ENCODE measurements at regions of chr1 and their contacts with region 1.

Region 1: DNA sequence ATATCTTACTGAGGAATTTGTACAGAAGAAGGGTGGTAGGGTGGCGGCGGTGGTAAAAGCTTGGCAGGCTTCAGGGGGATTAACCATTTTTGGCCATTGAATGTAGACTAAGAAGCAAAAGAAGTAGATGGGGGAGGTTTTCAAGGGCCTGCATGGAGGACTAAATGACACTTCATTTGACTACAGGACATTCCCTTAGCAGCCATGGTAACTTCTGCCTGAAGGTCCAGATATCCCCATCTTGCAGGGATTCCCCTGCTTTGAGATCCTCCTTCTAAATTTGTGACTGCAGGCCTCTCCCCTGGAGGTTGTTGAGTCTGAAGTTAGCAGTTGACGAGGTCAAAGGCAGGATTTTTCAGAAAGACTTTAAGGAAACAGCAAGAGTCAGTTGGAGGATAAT is 4.8 kb downstream of the VASH2 start:
- DNase-seq: no peak
- H3K4me3 Mint-ChIP-seq: no peak overlapping the region
- H3K27ac Mint-ChIP-seq: no peak overlapping the region
- H3K4me1 Mint-ChIP-seq: peaks cover 8% of the 10 kb centered on the region
- H3K27me3 Mint-ChIP-seq: peaks cover 78% of the 10 kb centered on the region

Region 2: DNA sequence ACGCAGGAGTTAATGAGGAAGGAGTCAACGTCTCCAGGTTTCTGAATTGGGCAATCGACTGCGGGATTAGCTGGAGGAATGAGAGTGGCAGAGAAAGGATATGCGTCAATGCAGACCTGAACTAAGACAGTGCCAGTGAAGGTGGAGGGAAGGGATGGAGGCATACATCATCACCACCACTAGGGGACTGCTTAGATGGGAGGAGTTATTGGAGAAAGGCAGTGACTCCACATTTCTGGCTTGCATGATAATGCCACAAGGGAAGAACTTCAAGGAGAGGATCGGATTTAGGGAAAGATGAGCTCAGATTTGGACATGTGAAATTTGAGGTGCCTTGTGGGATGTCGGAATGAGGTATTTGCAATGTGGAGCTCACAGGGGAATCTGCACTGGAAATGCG is 12.7 kb after region 1 on chr1:
- CTCF ChIA-PET with region 1: interaction called, 11 read pairs
- DNase-seq: no peak
- H3K4me3 Mint-ChIP-seq: no peak overlapping the region
- H3K27ac Mint-ChIP-seq: no peak overlapping the region
- H3K4me1 Mint-ChIP-seq: no peaks in the 10 kb centered on the region
- H3K27me3 Mint-ChIP-seq: peaks cover 39% of the 10 kb centered on the region